HepG2 (cell line): ENCODE measurements at regions of chr9 and their contacts with region 1.

Region 1: GRCh38 chr9:96217754-96218693 is 84.0 kb downstream of the HSD17B3 start:
- DNase-seq: peak; percentile 28
- ATAC-seq: peak; percentile 93
- H3K4me3 ChIP-seq: peak overlapping the region; percentile 35 to 72 (median 39)
- H3K27ac ChIP-seq: no peak overlapping the region
- H3K4me1 ChIP-seq: peaks cover 10% of the 10 kb centered on the region
- H3K27me3 ChIP-seq: peaks cover 0 to 38% of the 10 kb centered on the region in 2 experiments; a peak in 3 of 5 replicates
- CTCF ChIP-seq: peak; percentile 90
- EP300 ChIP-seq: no peak
- POLR2A ChIP-seq: no peak
- RAD21 ChIP-seq: peak; percentile 98

Region 2: GRCh38 chr9:96061293-96061987 is 156.6 kb before region 1 on chr9:
- CTCF ChIA-PET with region 1: no interaction called
- POLR2A ChIA-PET with region 1: no interaction called
- in situ Hi-C with region 1: no loop called
- intact Hi-C with region 1: loop called (anchors 10 kb)
- DNase-seq: peak; percentile 21
- ATAC-seq: peak; percentile 87
- H3K4me3 ChIP-seq: no peak overlapping the region
- H3K27ac ChIP-seq: no peak overlapping the region
- H3K4me1 ChIP-seq: peaks cover 8% of the 10 kb centered on the region; the same call in 1 of the 2 replicates
- H3K27me3 ChIP-seq: peaks cover 1 to 3% of the 10 kb centered on the region in 2 experiments; a peak in 2 of 5 replicates
- CTCF ChIP-seq: peak; percentile 61
- EP300 ChIP-seq: no peak
- POLR2A ChIP-seq: no peak
- RAD21 ChIP-seq: peak; percentile 45; the same call in 1 of the 2 replicates

Region 3: GRCh38 chr9:96116275-96117064 is 101.6 kb before region 1 on chr9:
- CTCF ChIA-PET with region 1: no interaction called
- POLR2A ChIA-PET with region 1: no interaction called
- in situ Hi-C with region 1: no loop called
- intact Hi-C with region 1: no loop called
- DNase-seq: peak; percentile 82
- ATAC-seq: peak; percentile 95
- H3K4me3 ChIP-seq: peak overlapping the region in 1 of 3 experiments; percentile 37; a peak in 2 of 6 replicates
- H3K27ac ChIP-seq: no peak overlapping the region
- H3K4me1 ChIP-seq: peaks cover 29% of the 10 kb centered on the region
- H3K27me3 ChIP-seq: no peaks in the 10 kb centered on the region
- CTCF ChIP-seq: 0 out of 2 replicates have a peak, but pooled peaks have one; percentile 5
- EP300 ChIP-seq: peak in 1 of 2 experiments; percentile 41; a peak in 1 of 4 replicates
- POLR2A ChIP-seq: 0 out of 4 replicates have a peak, but pooled peaks have one; percentile 26 to 27
- RAD21 ChIP-seq: no peak

Region 4: DNA sequence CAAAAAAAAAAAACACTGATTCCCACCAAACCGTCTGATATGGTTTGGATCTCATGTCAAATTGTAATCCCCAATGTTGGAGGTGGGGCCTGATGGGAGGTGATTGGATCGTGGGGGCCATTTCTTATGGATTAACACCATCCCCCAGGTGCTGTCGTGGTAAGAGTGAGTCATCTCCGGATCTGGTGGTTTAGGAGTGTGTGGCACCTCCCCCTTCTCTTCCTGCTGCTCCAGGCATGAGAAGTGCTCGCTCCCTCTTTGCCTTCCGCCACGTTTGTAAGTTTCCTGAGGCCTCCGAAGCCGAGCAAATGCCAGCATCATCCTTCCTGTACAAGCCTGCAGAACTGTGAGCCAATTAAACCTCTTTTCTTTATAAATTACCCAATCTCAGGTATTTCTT is 38.8 kb after region 1 on chr9:
- CTCF ChIA-PET with region 1: no interaction called
- POLR2A ChIA-PET with region 1: no interaction called
- in situ Hi-C with region 1: no loop called
- intact Hi-C with region 1: no loop called
- DNase-seq: peak; percentile 12
- ATAC-seq: no peak
- H3K4me3 ChIP-seq: no peak overlapping the region
- H3K27ac ChIP-seq: no peak overlapping the region
- H3K4me1 ChIP-seq: no peaks in the 10 kb centered on the region
- H3K27me3 ChIP-seq: no peaks in the 10 kb centered on the region; a peak in 1 of 5 replicates
- CTCF ChIP-seq: no peak
- EP300 ChIP-seq: no peak
- POLR2A ChIP-seq: no peak
- RAD21 ChIP-seq: no peak